HCT116 (cell line): ENCODE measurements at regions of chr7 and their contacts with region 1.

Region 1: GRCh38 chr7:130904031-130904757 is 170.2 kb upstream of the KLF14 start:
- DNase-seq: peak; percentile 93
- ATAC-seq: peak; percentile 27
- H3K4me3 ChIP-seq: no peak overlapping the region
- H3K27ac ChIP-seq: peak overlapping the region; percentile 99
- H3K4me1 ChIP-seq: peaks cover 92 to 99% of the 10 kb centered on the region in 2 experiments
- H3K27me3 ChIP-seq: no peaks in the 10 kb centered on the region
- CTCF ChIP-seq: no peak
- POLR2A ChIP-seq: no peak
- RAD21 ChIP-seq: no peak

Region 2: GRCh38 chr7:130632111-130632510 is 272.1 kb before region 1 on chr7:
- CTCF ChIA-PET with region 1: no interaction called
- POLR2A ChIA-PET with region 1: no interaction called
- RAD21 ChIA-PET with region 1: no interaction called
- intact Hi-C with region 1: no loop called
- DNase-seq: peak; percentile 26
- ATAC-seq: no peak
- H3K4me3 ChIP-seq: no peak overlapping the region
- H3K27ac ChIP-seq: peak overlapping the region; percentile 19; the same call in 1 of the 2 replicates
- H3K4me1 ChIP-seq: peaks cover 0 to 7% of the 10 kb centered on the region in 2 experiments; a peak in 2 of 4 replicates
- H3K27me3 ChIP-seq: no peaks in the 10 kb centered on the region
- CTCF ChIP-seq: no peak
- POLR2A ChIP-seq: no peak
- RAD21 ChIP-seq: no peak

Region 3: DNA sequence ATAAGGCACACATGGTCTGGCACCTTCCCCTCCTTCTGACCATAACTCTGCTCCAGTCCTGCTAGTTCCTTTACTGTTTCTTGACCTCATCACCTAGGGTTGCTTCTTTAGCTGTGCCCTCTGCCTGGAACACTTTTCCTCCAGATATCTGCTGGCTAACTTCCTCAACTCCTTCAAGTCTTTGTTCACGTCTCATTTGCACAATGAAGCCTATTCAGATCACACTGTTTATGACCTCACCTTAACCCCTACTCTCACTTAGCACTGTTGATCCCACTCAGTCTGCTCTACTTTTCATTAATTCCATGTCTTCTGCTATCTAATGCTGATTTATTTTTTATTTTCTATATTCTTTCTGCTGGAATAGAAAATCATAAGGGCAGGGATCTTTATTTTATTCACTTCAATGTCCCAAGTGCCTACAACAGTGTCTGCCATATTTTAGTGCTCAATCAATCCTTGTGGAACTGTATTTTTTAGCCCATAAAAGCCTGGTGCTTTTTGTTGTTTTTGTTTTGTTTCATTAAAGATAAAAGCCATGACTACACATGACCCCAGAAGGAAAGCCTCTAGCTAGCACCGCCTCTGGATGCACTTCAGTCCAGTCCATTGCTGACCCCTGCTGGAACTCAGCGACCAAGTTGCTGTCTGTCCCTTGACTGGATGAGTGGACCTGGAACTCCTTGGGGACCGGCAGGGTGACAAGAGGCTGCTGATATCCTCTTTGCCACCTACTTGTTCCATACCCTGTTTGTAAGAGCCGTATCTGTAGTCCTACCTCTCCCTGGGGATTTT is 182.5 kb before region 1 on chr7:
- CTCF ChIA-PET with region 1: no interaction called
- POLR2A ChIA-PET with region 1: no interaction called
- RAD21 ChIA-PET with region 1: no interaction called
- intact Hi-C with region 1: no loop called
- DNase-seq: peak; percentile 70
- ATAC-seq: peak; percentile 100
- H3K4me3 ChIP-seq: no peak overlapping the region
- H3K27ac ChIP-seq: no peak overlapping the region
- H3K4me1 ChIP-seq: no peaks in the 10 kb centered on the region
- H3K27me3 ChIP-seq: no peaks in the 10 kb centered on the region
- CTCF ChIP-seq: peak; percentile 68 to 81 (median 70)
- POLR2A ChIP-seq: no peak
- RAD21 ChIP-seq: peak; percentile 95

Region 4: DNA sequence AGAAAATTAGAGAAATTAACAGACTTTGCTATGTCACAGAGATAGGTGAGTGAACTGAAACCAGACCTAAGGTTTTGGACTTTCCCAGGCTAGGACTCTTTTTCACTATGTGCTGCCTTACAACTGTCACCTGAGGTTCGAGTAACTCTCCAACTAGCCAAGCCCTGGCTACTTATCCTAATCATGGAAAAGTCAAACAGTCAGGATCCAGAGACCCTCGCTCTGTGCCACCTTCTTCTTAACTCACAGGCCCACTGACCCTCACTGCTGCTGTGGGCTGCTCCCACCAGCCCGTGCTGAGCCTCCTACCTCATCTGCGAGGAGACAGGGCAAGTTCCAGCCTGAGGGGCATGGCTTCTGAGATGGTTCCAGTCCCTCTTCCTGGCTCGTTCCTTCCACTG is 41.2 kb after region 1 on chr7:
- CTCF ChIA-PET with region 1: no interaction called
- POLR2A ChIA-PET with region 1: interaction called, 12 read pairs
- RAD21 ChIA-PET with region 1: no interaction called
- intact Hi-C with region 1: no loop called
- DNase-seq: no peak
- ATAC-seq: no peak
- H3K4me3 ChIP-seq: no peak overlapping the region
- H3K27ac ChIP-seq: peak overlapping the region; percentile 85
- H3K4me1 ChIP-seq: peaks cover 76 to 96% of the 10 kb centered on the region in 2 experiments
- H3K27me3 ChIP-seq: no peaks in the 10 kb centered on the region
- CTCF ChIP-seq: no peak
- POLR2A ChIP-seq: no peak
- RAD21 ChIP-seq: no peak

Region 5: DNA sequence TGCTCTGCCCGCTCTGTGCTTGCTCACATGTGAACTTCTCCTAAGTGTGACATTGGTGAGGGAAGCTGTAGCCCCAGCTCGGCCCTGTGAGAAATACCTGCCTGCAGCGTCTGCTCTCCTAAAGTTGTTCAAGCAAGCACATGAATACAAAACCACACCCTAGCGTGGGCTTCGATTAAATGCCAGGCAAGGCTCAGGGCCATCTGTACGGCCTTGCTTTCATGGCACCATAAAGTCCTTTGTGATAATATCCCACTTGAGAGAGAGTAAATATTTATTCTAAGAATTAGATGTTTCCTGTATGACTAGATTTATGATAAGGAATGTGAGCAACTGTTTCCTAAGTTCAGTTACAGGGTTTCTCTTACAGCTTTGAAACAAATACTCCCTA is 92.6 kb after region 1 on chr7:
- CTCF ChIA-PET with region 1: no interaction called
- POLR2A ChIA-PET with region 1: interaction called, 19 read pairs
- RAD21 ChIA-PET with region 1: no interaction called
- intact Hi-C with region 1: loop called (anchors 5 kb)
- DNase-seq: peak; percentile 80
- ATAC-seq: peak; percentile 24
- H3K4me3 ChIP-seq: no peak overlapping the region
- H3K27ac ChIP-seq: peak overlapping the region; percentile 100
- H3K4me1 ChIP-seq: peaks cover 83 to 98% of the 10 kb centered on the region in 2 experiments
- H3K27me3 ChIP-seq: no peaks in the 10 kb centered on the region
- CTCF ChIP-seq: no peak
- POLR2A ChIP-seq: no peak
- RAD21 ChIP-seq: no peak

Region 6: GRCh38 chr7:131007394-131008330 is 103.5 kb after region 1 on chr7:
- CTCF ChIA-PET with region 1: no interaction called
- POLR2A ChIA-PET with region 1: interaction called, 11 read pairs
- RAD21 ChIA-PET with region 1: no interaction called
- intact Hi-C with region 1: no loop called
- DNase-seq: peak; percentile 85
- ATAC-seq: peak; percentile 67
- H3K4me3 ChIP-seq: peak overlapping the region in 1 of 2 experiments; percentile 3; a peak in 1 of 4 replicates
- H3K27ac ChIP-seq: peak overlapping the region; percentile 96
- H3K4me1 ChIP-seq: peaks cover 94 to 97% of the 10 kb centered on the region in 2 experiments
- H3K27me3 ChIP-seq: no peaks in the 10 kb centered on the region
- CTCF ChIP-seq: peak in 2 of 3 experiments; percentile 48 to 60; a peak in 4 of 6 replicates
- POLR2A ChIP-seq: no peak
- RAD21 ChIP-seq: no peak

Region 7: GRCh38 chr7:131057015-131057793 is 153.0 kb after region 1 on chr7:
- CTCF ChIA-PET with region 1: no interaction called
- POLR2A ChIA-PET with region 1: no interaction called
- RAD21 ChIA-PET with region 1: no interaction called
- intact Hi-C with region 1: no loop called
- DNase-seq: no peak
- ATAC-seq: no peak
- H3K4me3 ChIP-seq: no peak overlapping the region
- H3K27ac ChIP-seq: no peak overlapping the region
- H3K4me1 ChIP-seq: no peaks in the 10 kb centered on the region
- H3K27me3 ChIP-seq: no peaks in the 10 kb centered on the region
- CTCF ChIP-seq: no peak
- POLR2A ChIP-seq: no peak
- RAD21 ChIP-seq: no peak

Region 8: DNA sequence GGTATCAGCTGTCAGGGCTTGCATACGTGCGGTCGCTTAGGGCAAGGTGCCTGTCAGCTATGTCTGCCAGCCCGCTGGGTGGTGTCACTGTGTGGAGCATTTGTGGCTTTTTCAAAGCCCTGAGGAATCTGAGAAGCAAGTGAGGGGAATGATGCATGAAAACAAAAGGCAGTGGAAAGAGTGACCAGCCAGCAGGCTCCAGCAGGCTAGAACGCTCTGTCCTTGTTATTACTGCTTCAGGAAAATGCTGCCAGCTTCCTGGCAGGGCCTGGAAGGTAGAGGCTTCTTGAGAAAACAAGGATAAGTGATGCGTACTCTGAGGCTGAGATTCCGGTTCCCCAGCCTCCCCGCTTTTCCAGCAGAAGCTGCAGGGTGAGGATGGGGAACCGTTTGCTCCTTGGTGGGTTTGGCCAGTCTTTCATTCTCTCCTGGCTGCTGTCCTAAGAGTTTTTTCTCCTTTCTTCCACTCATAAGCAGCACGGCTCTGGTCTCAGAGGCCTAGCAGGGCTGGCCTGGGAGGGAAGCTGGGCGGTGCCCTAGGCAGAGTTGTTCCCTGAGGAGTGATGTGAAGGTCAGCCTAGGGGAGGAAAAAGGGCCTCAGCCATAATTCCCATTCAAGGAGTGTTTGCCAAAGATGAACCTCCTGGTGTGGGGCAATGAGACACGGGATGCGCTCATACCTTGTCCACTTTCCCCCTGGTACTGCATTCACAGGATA is 380.7 kb after region 1 on chr7:
- CTCF ChIA-PET with region 1: no interaction called
- POLR2A ChIA-PET with region 1: no interaction called
- RAD21 ChIA-PET with region 1: no interaction called
- intact Hi-C with region 1: no loop called
- DNase-seq: no peak
- ATAC-seq: no peak
- H3K4me3 ChIP-seq: no peak overlapping the region
- H3K27ac ChIP-seq: no peak overlapping the region
- H3K4me1 ChIP-seq: no peaks in the 10 kb centered on the region
- H3K27me3 ChIP-seq: no peaks in the 10 kb centered on the region
- CTCF ChIP-seq: no peak
- POLR2A ChIP-seq: no peak
- RAD21 ChIP-seq: no peak